ENCODE measurements at regions of chr16 and their contacts with region 1.

Region 1: GRCh38 chr16:66406534-66407221 is 20.4 kb upstream of the BEAN1 start:
- DNase-seq: peak; percentile 91
- ATAC-seq: peak; percentile 96
- H3K4me3 Mint-ChIP-seq: peak overlapping the region; percentile 83
- H3K27ac Mint-ChIP-seq: peak overlapping the region; percentile 86; the same call in 1 of the 2 replicates
- H3K4me1 Mint-ChIP-seq: peaks cover 9% of the 10 kb centered on the region
- H3K27me3 Mint-ChIP-seq: peaks cover 13% of the 10 kb centered on the region
- CTCF ChIP-seq: peak; percentile 96

Region 2: DNA sequence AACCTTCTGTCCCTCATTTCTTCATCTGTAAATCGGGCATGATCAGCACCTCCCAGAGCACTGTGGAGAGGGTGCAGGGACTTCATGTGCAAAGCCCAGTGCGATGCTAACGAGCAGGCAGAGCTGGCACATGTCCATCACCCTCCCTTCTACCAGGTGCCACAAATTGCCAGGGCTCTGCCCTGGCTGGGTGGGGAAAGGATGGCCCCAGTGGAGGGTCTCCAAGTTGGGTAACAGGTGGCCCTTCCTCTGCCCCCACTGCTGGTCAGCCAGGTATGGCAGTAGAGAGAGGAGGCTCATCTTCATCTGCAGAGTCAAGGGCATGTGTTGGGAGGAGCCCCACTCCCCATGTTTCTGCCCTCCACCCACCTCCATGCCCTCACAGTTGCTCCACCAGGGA is 101.7 kb before region 1 on chr16:
- CTCF ChIA-PET with region 1: no interaction called
- POLR2A ChIA-PET with region 1: no interaction called
- DNase-seq: no peak
- ATAC-seq: no peak
- H3K4me3 Mint-ChIP-seq: no peak overlapping the region
- H3K27ac Mint-ChIP-seq: no peak overlapping the region
- H3K4me1 Mint-ChIP-seq: no peaks in the 10 kb centered on the region
- H3K27me3 Mint-ChIP-seq: peaks cover 3% of the 10 kb centered on the region; the same call in 1 of the 2 replicates
- CTCF ChIP-seq: no peak

Region 3: DNA sequence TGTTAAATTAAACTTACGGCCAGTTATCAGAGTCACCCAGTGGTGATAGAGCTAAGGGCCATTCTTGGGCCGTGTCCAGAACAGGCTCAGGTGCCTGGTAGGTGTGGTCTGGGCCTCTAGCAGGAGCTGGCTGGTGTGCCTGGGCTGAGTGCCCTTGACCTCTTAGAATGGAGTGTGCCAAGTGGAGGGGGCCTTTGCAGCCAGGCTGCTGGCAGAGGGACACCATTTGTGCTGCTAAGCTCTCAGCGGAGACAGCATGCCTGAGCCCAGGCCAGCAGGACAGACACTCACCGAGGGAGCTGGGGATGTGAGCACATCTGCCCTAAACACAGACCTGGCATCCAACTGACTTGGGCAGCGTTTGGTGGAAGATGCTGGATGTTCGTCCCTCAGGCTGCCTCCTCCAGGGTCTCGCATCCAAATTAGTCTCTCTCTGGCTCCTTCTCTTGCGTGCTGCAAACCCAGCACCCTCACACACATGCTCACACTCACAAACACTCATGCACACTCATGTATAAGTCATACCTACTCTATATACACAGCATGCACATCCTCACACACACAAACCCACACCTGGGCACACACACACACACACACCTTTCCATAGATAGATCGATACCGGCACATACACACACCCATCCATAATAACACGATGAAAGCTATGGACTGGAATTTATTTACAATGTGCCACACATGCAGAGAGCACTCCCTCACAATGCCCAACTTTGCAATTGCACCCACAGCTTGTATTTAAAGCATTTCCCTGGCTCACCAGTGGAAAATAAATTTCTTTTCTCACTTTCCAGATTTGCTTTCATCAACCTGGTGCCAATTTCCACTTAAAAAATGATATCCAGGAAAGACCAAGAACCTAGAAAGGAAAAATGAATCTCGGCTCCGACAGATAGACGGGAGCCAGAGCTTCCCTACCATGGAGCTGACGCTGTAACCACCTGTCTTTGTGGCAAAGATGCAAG is 73.8 kb before region 1 on chr16:
- CTCF ChIA-PET with region 1: no interaction called
- POLR2A ChIA-PET with region 1: no interaction called
- DNase-seq: no peak
- ATAC-seq: no peak
- H3K4me3 Mint-ChIP-seq: no peak overlapping the region
- H3K27ac Mint-ChIP-seq: no peak overlapping the region
- H3K4me1 Mint-ChIP-seq: 0 out of 2 replicates have a peak, but pooled peaks cover 4% of the 10 kb centered on the region
- H3K27me3 Mint-ChIP-seq: peaks cover 5% of the 10 kb centered on the region
- CTCF ChIP-seq: no peak

Region 4: DNA sequence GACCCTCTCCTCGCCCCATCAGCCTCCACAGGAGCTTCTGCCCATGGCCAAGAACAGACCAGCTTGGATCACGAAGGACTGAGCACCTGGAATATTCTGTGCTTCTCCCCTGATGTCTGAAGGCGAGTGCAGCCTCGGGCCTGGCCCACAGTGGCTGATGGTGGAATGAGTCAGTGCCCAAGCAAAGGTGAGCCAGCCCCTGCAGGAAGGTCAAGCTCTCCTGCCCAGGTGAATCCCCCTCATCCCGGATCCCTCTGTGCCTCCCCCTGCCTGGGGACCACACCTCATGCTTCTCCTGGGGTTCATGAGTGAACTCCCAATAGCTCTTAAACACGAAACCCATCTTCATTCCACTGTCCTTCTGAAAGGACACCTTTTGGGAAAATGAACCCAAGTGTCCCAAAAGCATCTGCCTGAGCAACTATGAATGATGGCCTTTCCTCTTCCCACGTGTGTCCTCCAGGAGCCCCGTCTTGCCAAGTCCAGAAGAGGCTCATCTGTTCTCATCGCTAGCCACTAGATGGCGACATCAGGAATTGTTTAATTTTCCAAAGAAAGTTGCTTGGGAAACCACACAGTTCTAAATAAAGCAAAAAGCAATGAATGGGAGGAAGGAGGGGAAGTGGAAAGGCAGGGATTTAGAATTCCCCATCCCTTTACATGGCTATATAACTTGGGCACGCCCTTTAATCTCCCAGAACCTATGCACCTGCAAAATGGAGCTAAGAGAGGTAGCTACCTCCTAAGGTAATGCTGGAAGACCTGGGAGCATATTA is 49.3 kb before region 1 on chr16:
- CTCF ChIA-PET with region 1: interaction called, 13 read pairs
- POLR2A ChIA-PET with region 1: no interaction called
- DNase-seq: peak; percentile 47
- ATAC-seq: peak; percentile 74
- H3K4me3 Mint-ChIP-seq: no peak overlapping the region
- H3K27ac Mint-ChIP-seq: no peak overlapping the region
- H3K4me1 Mint-ChIP-seq: peaks cover 11% of the 10 kb centered on the region
- H3K27me3 Mint-ChIP-seq: peaks cover 7% of the 10 kb centered on the region
- CTCF ChIP-seq: peak; percentile 52; the same call in 1 of the 2 replicates

Region 5: DNA sequence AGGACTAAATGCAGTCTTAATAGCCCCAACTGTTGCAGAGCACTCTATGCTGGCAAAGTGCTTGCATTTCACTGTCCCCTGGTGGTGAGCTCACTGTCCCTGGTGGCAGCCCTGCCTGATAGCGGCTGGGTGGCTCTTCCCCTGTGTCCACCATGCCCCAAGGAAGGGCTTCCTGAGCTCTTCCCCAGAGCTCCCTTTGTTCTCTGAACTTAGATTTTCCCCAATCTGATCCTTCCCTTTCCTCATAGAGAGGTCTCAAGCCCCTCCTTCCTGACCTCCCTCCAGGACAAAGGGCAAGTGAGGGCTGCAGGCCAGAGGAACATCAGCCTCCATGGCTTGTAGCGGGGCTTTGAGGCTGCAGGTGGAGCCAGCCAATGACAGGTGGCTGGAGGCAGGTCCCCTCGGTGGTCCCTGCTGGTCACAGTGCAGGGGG is 37.4 kb after region 1 on chr16:
- CTCF ChIA-PET with region 1: interaction called, 22 read pairs
- POLR2A ChIA-PET with region 1: no interaction called
- DNase-seq: no peak
- ATAC-seq: peak; percentile 81
- H3K4me3 Mint-ChIP-seq: no peak overlapping the region
- H3K27ac Mint-ChIP-seq: no peak overlapping the region
- H3K4me1 Mint-ChIP-seq: peaks cover 6% of the 10 kb centered on the region
- H3K27me3 Mint-ChIP-seq: peaks cover 9% of the 10 kb centered on the region; the same call in 1 of the 2 replicates
- CTCF ChIP-seq: no peak

Region 6: DNA sequence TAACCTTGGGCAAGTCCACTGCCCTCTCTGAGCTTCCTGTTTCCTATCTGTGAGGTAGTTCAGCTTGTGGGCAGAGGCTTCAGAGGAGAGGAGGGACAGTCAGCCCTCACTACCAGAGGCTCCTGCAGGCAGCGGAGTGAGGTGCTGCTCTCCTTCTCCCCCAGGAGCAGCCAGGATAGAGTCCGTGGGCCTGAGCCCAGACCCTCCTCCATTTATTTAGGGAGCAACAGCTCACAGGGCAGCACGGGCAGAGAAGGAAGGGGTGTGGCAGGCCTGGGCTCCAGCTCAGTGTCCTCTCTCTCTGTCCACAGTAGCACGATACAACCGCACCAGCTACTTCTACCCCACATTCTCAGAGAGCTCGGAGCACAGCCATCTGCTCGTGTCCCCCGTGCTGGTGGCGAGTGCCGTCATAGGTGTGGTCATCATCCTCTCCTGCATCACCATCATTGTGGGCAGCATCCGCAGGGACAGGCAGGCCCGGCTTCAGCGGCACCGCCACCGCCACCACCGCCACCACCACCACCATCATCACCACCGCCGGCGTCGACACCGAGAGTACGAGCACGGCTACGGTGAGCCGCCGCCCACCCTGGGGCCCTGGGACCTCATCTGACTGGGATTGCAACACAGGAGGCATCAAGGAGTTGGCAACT is 62.7 kb after region 1 on chr16:
- CTCF ChIA-PET with region 1: interaction called, 17 read pairs
- POLR2A ChIA-PET with region 1: no interaction called
- DNase-seq: no peak
- ATAC-seq: no peak
- H3K4me3 Mint-ChIP-seq: no peak overlapping the region
- H3K27ac Mint-ChIP-seq: no peak overlapping the region
- H3K4me1 Mint-ChIP-seq: peaks cover 6% of the 10 kb centered on the region
- H3K27me3 Mint-ChIP-seq: no peaks in the 10 kb centered on the region
- CTCF ChIP-seq: no peak

Region 7: DNA sequence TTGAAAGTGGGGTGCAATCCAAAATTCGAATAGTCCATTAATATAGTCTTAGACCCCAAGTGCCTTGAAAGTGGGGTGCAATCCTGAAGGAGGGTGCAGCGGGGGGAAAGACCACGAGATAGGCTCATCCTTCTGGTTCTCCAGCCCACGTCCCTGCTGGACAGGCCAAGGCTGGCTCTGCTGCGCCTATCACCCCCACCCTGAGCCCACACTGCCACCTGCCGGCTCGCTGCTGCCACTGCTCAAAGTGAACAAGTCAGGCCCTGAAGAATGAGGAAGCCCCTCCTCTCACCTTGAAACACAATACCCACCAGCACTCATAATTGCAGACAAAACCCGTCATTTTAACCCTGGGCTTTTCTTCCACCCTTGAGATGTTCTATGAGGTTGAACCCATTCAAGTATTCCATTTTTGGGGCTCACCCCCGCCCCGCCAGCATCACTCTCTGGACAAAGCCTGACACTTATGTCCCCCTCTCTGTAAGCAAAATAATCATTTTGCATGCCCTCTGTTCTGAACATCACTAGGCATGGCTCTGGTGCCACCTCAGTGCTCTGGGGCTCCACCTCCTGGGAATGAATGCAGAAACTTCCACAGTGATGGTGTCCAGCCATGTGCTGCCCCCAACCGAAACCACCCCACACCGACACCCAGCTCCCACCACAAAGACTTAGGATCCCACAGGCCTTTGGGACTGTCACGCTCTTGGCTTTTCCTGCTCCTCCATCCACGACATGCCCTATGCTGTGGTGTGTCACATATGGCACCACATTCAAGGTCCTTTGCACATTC is 77.2 kb after region 1 on chr16:
- CTCF ChIA-PET with region 1: interaction called, 20 read pairs
- POLR2A ChIA-PET with region 1: no interaction called
- DNase-seq: peak; percentile 91
- ATAC-seq: peak; percentile 91
- H3K4me3 Mint-ChIP-seq: no peak overlapping the region
- H3K27ac Mint-ChIP-seq: no peak overlapping the region
- H3K4me1 Mint-ChIP-seq: peaks cover 9% of the 10 kb centered on the region
- H3K27me3 Mint-ChIP-seq: peaks cover 2% of the 10 kb centered on the region
- CTCF ChIP-seq: peak; percentile 80

Region 8: GRCh38 chr16:66588981-66589713 is 182.5 kb after region 1 on chr16:
- CTCF ChIA-PET with region 1: interaction called, 45 read pairs
- POLR2A ChIA-PET with region 1: no interaction called
- DNase-seq: peak; percentile 79
- ATAC-seq: peak; percentile 99
- H3K4me3 Mint-ChIP-seq: no peak overlapping the region
- H3K27ac Mint-ChIP-seq: no peak overlapping the region; the same call in 1 of the 2 replicates
- H3K4me1 Mint-ChIP-seq: peaks cover 17% of the 10 kb centered on the region
- H3K27me3 Mint-ChIP-seq: no peaks in the 10 kb centered on the region
- CTCF ChIP-seq: peak; percentile 42; the same call in 1 of the 2 replicates

Region 9: GRCh38 chr16:66618588-66619375 is 212.1 kb after region 1 on chr16:
- CTCF ChIA-PET with region 1: no interaction called
- POLR2A ChIA-PET with region 1: no interaction called
- DNase-seq: no peak
- ATAC-seq: no peak
- H3K4me3 Mint-ChIP-seq: no peak overlapping the region
- H3K27ac Mint-ChIP-seq: peak overlapping the region; percentile 19; the same call in 1 of the 2 replicates
- H3K4me1 Mint-ChIP-seq: peaks cover 28% of the 10 kb centered on the region
- H3K27me3 Mint-ChIP-seq: no peaks in the 10 kb centered on the region
- CTCF ChIP-seq: no peak

Measured in WTC11 (cell line).